B cell (primary cell): ENCODE measurements at regions of chr7 and their contacts with region 1.

Region 1: GRCh38 chr7:152336754-152337368 is 98.9 kb downstream of the KMT2C start:
- DNase-seq: peak; percentile 62
- ATAC-seq: peak; percentile 61
- H3K4me3 ChIP-seq: peak overlapping the region in 1 of 5 experiments; percentile 15
- H3K4me3 Mint-ChIP-seq: peak overlapping the region; percentile 16
- H3K27ac ChIP-seq: no peak overlapping the region
- H3K27ac Mint-ChIP-seq: peak overlapping the region; percentile 53
- H3K4me1 ChIP-seq: peaks cover 35 to 41% of the 10 kb centered on the region in 2 donors
- H3K4me1 Mint-ChIP-seq: peaks cover 57% of the 10 kb centered on the region
- H3K27me3 ChIP-seq: no peaks in the 10 kb centered on the region
- H3K27me3 Mint-ChIP-seq: no peaks in the 10 kb centered on the region
- CTCF ChIP-seq: peak; percentile 73

Region 2: GRCh38 chr7:152436111-152436930 is 99.5 kb after region 1 on chr7:
- CTCF ChIA-PET with region 1: interaction called, 7 read pairs
- POLR2A ChIA-PET with region 1: interaction called, 4 read pairs
- intact Hi-C with region 1: loop called (anchors 2 kb)
- DNase-seq: peak; percentile 94
- ATAC-seq: peak; percentile 70
- H3K4me3 ChIP-seq: peak overlapping the region in 4 of 5 experiments; percentile 51 to 84 (median 68)
- H3K4me3 Mint-ChIP-seq: peak overlapping the region; percentile 89
- H3K27ac ChIP-seq: peak overlapping the region; percentile 76 to 89
- H3K27ac Mint-ChIP-seq: peak overlapping the region; percentile 93
- H3K4me1 ChIP-seq: peaks cover 12 to 13% of the 10 kb centered on the region in 2 donors
- H3K4me1 Mint-ChIP-seq: peaks cover 32% of the 10 kb centered on the region
- H3K27me3 ChIP-seq: no peaks in the 10 kb centered on the region
- H3K27me3 Mint-ChIP-seq: no peaks in the 10 kb centered on the region
- CTCF ChIP-seq: no peak

Region 3: GRCh38 chr7:152704796-152705384 is 368.0 kb after region 1 on chr7:
- CTCF ChIA-PET with region 1: interaction called, 64 read pairs
- POLR2A ChIA-PET with region 1: interaction called, 3 read pairs
- intact Hi-C with region 1: loop called (anchors 1 kb)
- DNase-seq: no peak
- ATAC-seq: no peak
- H3K4me3 ChIP-seq: no peak overlapping the region
- H3K4me3 Mint-ChIP-seq: no peak overlapping the region
- H3K27ac ChIP-seq: no peak overlapping the region
- H3K27ac Mint-ChIP-seq: no peak overlapping the region
- H3K4me1 ChIP-seq: no peaks in the 10 kb centered on the region
- H3K4me1 Mint-ChIP-seq: no peaks in the 10 kb centered on the region
- H3K27me3 ChIP-seq: no peaks in the 10 kb centered on the region
- H3K27me3 Mint-ChIP-seq: peaks cover 4% of the 10 kb centered on the region
- CTCF ChIP-seq: no peak